ENCODE measurements at regions of chr3 and their contacts with region 1.

Region 1: DNA sequence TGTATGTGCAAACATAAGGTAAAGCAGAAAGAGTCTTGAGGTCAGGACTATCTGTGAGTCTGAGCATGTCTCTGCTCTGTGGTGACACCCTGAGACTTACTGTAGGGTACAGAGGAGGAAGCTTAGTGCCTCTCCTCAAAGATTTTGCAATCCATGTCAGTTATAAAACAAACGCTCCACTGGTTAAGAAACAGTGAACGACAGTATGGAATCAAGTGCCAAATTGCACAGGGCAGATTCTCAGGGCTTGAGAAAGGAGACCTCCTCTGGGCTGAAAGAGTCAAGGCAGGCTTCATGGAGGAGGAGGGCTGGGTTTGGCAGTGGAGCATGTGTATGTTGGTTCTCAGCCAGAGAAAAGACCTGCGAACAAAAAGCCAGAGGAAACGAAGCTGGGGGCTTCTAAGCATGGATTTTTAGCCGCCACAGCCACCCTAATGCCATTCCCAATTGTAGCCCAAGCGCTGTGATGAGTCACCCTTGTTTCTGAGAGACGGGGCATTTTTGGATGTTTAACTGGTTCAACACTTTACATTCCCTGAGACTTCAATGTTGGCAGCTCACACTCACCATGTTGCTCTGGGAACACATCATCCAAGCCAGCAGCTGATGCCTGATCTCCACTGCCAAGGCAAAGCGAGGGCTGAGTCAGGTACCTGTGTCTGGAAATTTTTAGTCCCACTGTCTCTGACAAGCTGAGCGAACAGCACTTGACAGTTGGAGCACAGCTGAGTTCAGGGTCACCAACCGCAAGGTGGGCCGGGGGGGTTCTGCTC is 3.4 kb upstream of the DGKG start:
- DNase-seq: peak; percentile 35
- H3K4me3 ChIP-seq: no peak overlapping the region
- CTCF ChIP-seq: no peak

Region 2: GRCh38 chr3:186406669-186407635 is 41.6 kb after region 1 on chr3:
- in situ Hi-C with region 1: no loop called
- DNase-seq: no peak
- H3K4me3 ChIP-seq: no peak overlapping the region
- CTCF ChIP-seq: no peak

Region 3: GRCh38 chr3:186432189-186432588 is 66.8 kb after region 1 on chr3:
- in situ Hi-C with region 1: loop called (anchors 5 kb)
- DNase-seq: no peak
- H3K4me3 ChIP-seq: no peak overlapping the region
- CTCF ChIP-seq: no peak

Region 4: DNA sequence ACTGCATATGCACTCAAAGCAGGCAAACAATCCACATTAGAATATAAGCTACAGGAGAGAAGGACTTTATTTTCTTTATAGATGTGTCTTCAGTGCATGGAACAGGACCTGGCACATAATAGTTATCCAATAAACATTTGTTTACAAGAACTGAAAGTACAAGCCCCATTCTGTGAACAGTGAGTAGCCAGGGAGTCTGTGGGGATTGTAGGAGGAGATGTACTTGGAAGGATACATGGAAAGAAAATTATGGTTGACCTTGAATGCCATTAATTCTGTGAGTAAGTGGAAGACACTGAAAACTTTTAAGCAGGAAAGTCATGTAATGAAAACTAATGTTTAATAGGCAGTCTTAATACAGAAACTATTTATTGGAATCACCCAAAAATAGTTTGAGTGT is 897.9 kb after region 1 on chr3:
- in situ Hi-C with region 1: no loop called
- DNase-seq: no peak
- H3K4me3 ChIP-seq: no peak overlapping the region
- CTCF ChIP-seq: no peak